Calu3 (cell line): ENCODE measurements at regions of chr12 and their contacts with region 1.

Region 1: DNA sequence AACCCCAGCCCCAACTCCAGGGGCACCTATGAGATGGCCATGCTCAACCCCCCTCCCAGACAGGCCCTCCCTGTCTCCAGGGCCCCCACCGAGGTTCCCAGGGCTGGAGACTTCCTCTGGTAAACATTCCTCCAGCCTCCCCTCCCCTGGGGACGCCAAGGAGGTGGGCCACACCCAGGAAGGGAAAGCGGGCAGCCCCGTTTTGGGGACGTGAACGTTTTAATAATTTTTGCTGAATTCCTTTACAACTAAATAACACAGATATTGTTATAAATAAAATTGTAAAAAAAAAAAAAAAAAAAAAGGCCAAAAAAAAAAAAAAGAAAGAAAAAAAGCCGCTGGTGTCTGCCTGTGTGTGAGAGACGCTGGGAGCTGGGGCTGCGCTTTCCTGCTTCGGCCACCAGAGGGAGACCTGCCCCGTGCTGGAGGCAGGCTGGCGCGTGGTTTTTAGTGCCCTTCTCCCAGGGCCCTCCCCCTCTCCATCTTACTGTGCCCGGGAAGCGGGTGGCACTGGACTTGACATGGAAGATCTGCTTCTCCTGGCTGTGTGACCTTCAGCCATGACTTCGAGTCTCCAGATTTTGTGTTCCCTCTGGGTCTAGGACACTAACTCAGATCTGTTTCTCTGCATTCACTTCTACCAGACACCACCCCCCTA is 3.4 kb upstream of the NXPH4 start:
- DNase-seq: peak; percentile 94
- H3K4me3 Mint-ChIP-seq: no peak overlapping the region
- H3K27ac Mint-ChIP-seq: no peak overlapping the region
- H3K4me1 Mint-ChIP-seq: peaks cover 37% of the 10 kb centered on the region
- H3K27me3 Mint-ChIP-seq: peaks cover 39% of the 10 kb centered on the region
- CTCF ChIP-seq: peak; percentile 83

Region 2: DNA sequence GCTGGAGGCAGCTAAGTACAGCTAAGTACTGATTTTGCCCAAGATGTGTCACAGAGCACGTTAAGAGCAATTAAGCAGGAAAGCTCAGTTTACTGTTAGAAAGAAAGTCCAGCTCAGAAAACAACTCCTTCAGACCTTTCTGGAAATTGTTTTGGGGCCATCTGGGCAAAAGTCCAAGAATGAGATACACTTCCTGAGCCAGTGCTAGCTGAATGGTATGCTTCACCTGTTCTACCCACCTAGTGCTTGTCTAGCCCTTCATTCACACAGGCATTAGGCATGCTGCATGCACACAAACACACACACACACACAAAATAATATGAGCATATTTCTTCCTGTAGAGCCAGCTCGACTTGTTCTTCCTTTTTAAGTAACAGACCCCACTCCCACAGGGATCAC is 1199.0 kb before region 1 on chr12:
- CTCF ChIA-PET with region 1: no interaction called
- intact Hi-C with region 1: no loop called
- DNase-seq: peak; percentile 19
- H3K4me3 Mint-ChIP-seq: no peak overlapping the region
- H3K27ac Mint-ChIP-seq: no peak overlapping the region
- H3K4me1 Mint-ChIP-seq: peaks cover 10% of the 10 kb centered on the region
- H3K27me3 Mint-ChIP-seq: no peaks in the 10 kb centered on the region
- CTCF ChIP-seq: no peak

Region 3: DNA sequence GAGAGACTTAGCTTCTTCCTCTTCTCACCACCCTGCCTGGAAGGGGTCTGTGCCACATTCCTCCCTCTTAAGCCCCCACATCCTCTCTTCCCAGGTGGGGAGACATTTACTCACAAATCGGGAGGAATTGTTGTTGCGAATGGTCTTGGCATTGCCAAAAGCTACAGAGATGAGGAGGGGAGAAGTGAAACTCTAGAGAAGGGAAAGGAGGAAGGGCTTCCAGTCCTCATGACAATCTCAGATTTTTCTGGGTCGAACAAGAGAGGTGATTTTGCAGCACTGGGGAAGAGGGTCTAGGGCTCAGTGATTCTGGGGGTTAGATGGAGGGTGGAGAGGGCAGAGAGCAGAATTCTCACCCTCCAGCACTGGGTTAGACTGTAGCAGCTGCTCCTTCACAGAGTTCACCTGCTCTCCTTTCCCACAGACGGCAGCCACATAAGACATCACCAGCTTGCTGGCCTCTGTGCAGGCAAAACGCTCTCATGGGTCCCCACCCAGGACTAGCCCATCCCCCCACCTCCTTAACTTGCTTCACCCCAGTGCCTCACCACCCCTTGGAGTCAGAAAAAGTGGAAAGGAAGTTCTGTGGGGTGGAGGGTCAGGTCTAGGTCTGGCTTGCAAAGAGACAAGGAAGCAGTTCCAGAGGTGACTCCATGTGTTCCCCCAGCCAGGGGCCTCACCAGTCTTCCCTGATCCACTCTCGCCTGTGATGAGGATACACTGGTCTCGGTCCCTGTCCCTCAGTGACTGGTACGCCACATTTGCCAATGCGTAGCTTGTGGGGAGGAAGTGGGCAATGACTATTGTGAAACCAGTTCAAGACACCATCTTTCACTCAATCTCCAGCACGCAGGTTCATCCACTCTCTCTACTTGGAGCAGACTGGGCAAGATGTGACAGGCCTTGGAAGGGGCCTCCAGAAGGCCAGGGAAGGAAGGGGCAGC is 166.0 kb before region 1 on chr12:
- CTCF ChIA-PET with region 1: no interaction called
- intact Hi-C with region 1: no loop called
- DNase-seq: no peak
- H3K4me3 Mint-ChIP-seq: no peak overlapping the region
- H3K27ac Mint-ChIP-seq: no peak overlapping the region
- H3K4me1 Mint-ChIP-seq: peaks cover 16% of the 10 kb centered on the region
- H3K27me3 Mint-ChIP-seq: peaks cover 55% of the 10 kb centered on the region
- CTCF ChIP-seq: no peak

Region 4: DNA sequence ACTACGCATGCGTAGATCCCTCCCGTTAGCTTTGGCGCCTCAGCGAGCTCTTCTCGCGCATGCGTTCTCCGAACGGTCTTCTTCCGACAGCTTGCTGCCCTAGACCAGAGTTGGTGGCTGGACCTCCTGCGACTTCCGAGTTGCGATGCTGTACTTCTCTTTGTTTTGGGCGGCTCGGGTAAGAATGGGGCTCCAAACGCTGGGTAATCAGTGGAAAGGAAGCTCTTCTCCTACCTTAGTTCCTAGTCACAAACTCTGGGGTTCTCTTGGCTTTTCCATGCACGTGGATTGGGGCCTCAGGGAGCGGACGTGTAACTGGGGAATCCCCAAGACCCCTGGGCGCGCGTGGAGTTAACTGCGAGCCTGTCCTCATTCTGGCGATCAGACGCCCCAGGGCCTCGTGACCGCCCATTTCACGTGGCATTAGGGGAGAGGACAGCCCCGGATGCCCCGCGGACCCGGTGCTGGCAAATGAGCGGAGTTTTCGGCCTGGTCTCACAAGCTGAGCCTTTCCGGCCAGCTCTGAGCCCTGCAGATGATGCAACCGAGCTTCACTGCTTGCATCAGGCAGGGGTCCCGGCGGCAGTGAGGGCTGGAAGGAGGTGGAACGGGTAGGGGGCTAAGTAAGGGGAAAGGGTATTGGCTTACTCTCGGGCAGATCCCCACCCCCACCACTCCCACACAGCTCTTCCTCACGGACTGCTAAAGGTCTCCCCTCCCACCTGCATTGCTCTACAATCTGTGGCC is 16.6 kb after region 1 on chr12 and contains the start of gene SHMT2:
- CTCF ChIA-PET with region 1: interaction called, 26 read pairs
- intact Hi-C with region 1: no loop called
- DNase-seq: peak; percentile 97
- H3K4me3 Mint-ChIP-seq: peak within 1 kb of the TSS; percentile 98
- H3K27ac Mint-ChIP-seq: peak within 1 kb of the TSS; percentile 99
- H3K4me1 Mint-ChIP-seq: peaks cover 39% of the 10 kb centered on the region
- H3K27me3 Mint-ChIP-seq: peaks cover 34% of the 10 kb centered on the region
- CTCF ChIP-seq: no peak
- total RNA-seq, gene SHMT2: 203 and 243 TPM in 2 replicates

Region 5: DNA sequence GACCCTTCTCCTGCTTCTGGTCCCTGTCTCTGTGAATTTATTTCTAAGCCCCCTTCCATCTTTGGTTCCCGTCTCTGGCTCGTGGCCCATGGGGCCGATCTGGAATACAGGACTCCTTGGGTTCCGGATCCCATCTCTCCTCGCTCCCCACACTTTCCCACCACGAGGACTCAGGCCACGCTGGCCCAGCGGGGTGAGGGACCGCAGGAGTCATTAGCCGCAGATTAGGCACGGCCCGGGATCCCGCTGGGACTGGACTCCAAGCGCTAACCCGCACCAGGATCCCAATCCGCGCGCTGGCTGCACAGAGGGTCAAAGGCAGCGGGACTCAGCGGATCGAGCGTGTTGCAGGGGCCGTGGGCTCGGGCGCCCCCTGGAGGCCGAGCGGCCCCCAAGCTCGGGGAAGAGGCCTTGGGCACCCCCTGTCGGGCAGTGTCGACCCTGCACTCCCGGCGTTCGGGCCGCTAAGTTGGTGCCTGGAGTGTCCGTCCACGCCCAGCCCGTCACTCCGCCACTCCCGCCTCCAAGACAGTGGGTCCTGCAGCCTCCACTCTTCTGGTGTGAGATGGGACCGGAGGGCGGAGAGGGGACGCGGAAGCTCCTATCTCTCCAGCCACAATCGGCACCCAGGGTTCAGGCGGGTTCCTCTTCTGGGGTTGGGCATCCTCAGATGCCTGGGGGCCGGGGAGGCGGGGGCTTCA is 25.8 kb after region 1 on chr12:
- CTCF ChIA-PET with region 1: interaction called, 13 read pairs
- intact Hi-C with region 1: loop called (anchors 1 kb)
- DNase-seq: peak; percentile 94
- H3K4me3 Mint-ChIP-seq: peak overlapping the region; percentile 82
- H3K27ac Mint-ChIP-seq: peak overlapping the region; percentile 40
- H3K4me1 Mint-ChIP-seq: peaks cover 30% of the 10 kb centered on the region
- H3K27me3 Mint-ChIP-seq: peaks cover 51% of the 10 kb centered on the region
- CTCF ChIP-seq: peak; percentile 100

Region 6: DNA sequence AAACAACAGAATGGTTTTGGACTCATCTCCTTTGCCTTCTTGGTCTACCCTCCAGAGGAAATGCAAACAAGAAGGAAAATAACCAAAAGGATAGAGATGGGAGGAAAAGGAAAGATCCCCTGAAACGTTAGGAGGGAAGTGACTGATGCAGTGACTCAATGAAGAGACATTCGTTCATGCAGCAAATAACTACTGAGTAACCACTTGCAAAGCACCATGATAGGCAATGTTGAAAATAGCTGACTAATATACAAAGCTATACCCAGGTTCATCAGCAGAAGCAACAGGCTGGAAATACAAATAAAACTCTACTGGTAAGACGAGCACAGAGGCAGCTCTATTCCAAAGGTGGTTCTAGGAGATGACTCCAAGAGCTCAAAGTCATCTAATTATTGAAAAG is 175.8 kb after region 1 on chr12:
- CTCF ChIA-PET with region 1: no interaction called
- intact Hi-C with region 1: no loop called
- DNase-seq: no peak
- H3K4me3 Mint-ChIP-seq: no peak overlapping the region
- H3K27ac Mint-ChIP-seq: no peak overlapping the region
- H3K4me1 Mint-ChIP-seq: no peaks in the 10 kb centered on the region
- H3K27me3 Mint-ChIP-seq: no peaks in the 10 kb centered on the region
- CTCF ChIP-seq: no peak